IMR-90 (cell line): ENCODE measurements at regions of chr14 and their contacts with region 1.

Region 1: DNA sequence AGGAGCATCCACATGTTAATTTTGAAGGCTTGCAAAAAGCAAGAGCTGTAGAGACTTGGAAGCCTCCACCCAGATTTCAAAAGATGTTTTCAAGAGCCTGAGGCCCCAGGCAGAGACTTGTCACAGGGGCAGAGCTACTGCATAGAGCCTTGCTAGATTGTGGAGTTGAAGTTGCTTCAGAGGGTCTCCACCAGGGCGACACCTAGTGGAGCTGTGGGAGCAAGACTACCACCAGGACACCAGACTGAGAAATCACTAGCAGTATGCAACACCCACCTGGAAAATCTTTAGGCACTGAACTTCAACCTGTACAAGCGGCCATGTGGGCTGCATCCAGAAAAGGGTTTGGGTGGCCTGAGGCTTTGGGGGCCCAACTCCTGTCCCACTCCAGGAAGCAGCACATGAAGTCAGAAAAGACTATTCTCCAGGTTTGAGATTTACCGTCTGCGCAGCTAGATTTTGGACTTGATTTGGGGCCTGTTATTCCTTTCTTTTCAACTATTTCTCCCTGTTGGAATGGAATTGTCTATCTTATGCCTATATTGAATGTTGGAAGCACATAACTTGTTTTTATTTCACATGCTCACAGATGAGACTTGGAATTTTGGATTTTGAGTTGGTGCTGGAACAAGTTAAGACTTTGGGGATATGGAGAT is 508.6 kb downstream of the FLRT2 start:
- DNase-seq: peak; percentile 62
- ATAC-seq: peak; percentile 89
- H3K4me3 ChIP-seq: no peak overlapping the region
- H3K27ac ChIP-seq: no peak overlapping the region
- H3K4me1 ChIP-seq: no peaks in the 10 kb centered on the region
- H3K27me3 ChIP-seq: no peaks in the 10 kb centered on the region
- CTCF ChIP-seq: peak; percentile 71
- POLR2A ChIP-seq: no peak
- RAD21 ChIP-seq: peak; percentile 68

Region 2: DNA sequence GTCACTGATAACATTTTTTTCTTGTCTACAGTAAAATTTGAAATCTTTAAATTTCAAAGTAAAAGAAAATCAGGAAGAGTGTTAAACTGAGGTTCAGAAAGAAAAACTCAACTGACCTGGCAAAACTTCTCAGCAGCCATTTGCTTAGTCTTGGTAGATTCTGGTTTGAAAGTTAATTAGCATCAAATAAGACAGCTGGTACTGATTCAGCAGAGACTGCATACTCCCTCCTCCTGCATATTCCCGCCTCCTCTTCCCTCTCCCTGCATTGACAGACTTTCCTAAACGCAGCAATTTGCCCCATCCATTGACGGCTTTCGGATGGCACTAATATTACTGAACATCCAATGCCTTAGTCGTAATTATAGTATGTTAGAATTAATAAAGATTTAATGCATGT is 12.2 kb after region 1 on chr14:
- CTCF ChIA-PET with region 1: no interaction called
- POLR2A ChIA-PET with region 1: no interaction called
- dilution Hi-C with region 1: no loop called
- in situ Hi-C with region 1: no loop called
- intact Hi-C with region 1: loop called (anchors 1 kb)
- DNase-seq: no peak
- ATAC-seq: no peak
- H3K4me3 ChIP-seq: no peak overlapping the region
- H3K27ac ChIP-seq: no peak overlapping the region
- H3K4me1 ChIP-seq: no peaks in the 10 kb centered on the region
- H3K27me3 ChIP-seq: no peaks in the 10 kb centered on the region
- CTCF ChIP-seq: no peak
- POLR2A ChIP-seq: no peak
- RAD21 ChIP-seq: no peak